ENCODE measurements at regions of chr12 and their contacts with region 1.

Region 1: GRCh38 chr12:113912760-113913329 is 53.3 kb downstream of the RBM19 start:
- DNase-seq: peak; percentile 53
- H3K4me3 ChIP-seq: no peak overlapping the region
- H3K27ac ChIP-seq: no peak overlapping the region
- H3K4me1 ChIP-seq: no peaks in the 10 kb centered on the region
- H3K27me3 ChIP-seq: no peaks in the 10 kb centered on the region
- CTCF ChIP-seq: peak; percentile 88

Region 2: DNA sequence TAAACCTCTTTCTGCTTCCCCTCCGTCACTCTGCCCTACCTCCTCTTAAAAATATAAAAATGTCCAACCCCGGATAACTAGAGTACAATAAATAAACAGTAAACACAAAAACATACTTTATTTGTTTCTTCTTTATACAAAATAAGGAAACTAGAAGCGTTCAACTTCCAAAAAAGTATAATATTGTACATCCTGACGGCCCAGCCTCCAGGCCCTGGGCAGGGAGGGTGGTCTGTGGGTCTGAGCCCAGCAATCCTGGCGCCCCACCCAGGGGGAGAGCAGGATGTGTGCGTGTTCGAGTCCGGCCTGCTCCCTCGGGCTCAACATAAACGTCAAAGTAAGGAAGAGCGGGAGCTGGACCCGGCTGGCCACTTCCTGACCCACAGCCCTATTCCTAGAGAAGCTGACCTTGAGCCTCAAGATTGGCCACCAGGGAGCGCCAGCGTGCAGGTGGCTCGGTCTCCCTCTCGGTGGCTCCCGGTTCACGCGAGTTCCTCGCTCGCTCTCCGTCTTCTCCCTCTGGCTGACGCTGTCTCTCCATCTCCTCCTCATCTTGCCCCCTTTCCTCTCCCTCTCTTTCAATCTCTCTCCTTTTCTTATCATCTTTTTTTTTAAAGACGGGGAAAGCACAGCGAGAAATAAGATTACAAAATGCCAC is 450.6 kb before region 1 on chr12:
- intact Hi-C with region 1: loop called (anchors 5 kb)
- DNase-seq: peak; percentile 82
- H3K4me3 ChIP-seq: peak overlapping the region; percentile 53
- H3K27ac ChIP-seq: no peak overlapping the region
- H3K4me1 ChIP-seq: peaks cover 46% of the 10 kb centered on the region
- H3K27me3 ChIP-seq: peaks cover 100% of the 10 kb centered on the region
- CTCF ChIP-seq: peak; percentile 92

Region 3: GRCh38 chr12:113766879-113767878 is 145.7 kb before region 1 on chr12:
- intact Hi-C with region 1: no loop called
- DNase-seq: no peak
- H3K4me3 ChIP-seq: no peak overlapping the region
- H3K27ac ChIP-seq: no peak overlapping the region
- H3K4me1 ChIP-seq: no peaks in the 10 kb centered on the region
- H3K27me3 ChIP-seq: peaks cover 84% of the 10 kb centered on the region
- CTCF ChIP-seq: no peak

Region 4: DNA sequence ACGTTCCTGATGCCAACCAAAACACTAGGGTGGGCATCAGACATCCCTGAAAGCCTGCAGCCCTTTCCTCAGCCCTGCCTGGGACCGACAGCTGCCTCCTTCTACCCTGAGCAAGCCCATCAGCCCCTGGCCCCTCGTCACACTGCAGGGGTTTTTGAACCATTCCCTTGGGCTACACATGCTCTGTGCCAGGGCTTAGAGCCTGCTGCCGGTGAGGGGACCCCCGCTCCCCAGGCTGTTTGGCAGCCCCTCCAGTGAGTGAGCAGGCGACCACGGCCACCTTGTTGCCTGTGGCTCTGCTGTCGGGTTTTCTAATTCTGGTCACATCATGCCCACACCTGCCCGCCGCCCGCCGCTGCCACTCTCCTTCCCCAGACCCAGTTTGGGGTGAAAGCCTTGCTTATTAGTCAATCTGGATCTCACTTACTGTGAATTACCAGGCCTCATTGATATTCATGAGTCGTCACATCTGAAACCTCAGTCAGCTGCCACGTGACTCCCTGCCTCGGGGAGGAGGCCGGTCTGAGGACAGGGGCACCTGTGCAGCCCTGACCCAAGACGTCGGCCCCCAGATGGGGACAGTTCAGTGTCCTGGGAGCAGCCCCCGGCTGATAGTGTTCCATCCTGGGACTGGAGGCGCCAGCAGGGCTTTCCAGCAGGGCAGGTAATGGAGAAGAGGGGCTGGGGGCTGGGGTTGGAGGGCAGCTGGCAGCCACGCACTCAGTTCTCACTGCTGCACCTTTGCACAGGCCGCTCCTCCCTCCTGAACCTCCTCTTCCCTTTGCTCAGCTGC is 109.7 kb before region 1 on chr12:
- intact Hi-C with region 1: no loop called
- DNase-seq: no peak
- H3K4me3 ChIP-seq: no peak overlapping the region
- H3K27ac ChIP-seq: no peak overlapping the region
- H3K4me1 ChIP-seq: no peaks in the 10 kb centered on the region
- H3K27me3 ChIP-seq: peaks cover 16% of the 10 kb centered on the region
- CTCF ChIP-seq: no peak

Measured in left ventricle myocardium inferior (tissue), 1 donor.